Heart right ventricle (tissue), 16 donors: ENCODE measurements at regions of chr21 and their contacts with region 1.

Region 1: DNA sequence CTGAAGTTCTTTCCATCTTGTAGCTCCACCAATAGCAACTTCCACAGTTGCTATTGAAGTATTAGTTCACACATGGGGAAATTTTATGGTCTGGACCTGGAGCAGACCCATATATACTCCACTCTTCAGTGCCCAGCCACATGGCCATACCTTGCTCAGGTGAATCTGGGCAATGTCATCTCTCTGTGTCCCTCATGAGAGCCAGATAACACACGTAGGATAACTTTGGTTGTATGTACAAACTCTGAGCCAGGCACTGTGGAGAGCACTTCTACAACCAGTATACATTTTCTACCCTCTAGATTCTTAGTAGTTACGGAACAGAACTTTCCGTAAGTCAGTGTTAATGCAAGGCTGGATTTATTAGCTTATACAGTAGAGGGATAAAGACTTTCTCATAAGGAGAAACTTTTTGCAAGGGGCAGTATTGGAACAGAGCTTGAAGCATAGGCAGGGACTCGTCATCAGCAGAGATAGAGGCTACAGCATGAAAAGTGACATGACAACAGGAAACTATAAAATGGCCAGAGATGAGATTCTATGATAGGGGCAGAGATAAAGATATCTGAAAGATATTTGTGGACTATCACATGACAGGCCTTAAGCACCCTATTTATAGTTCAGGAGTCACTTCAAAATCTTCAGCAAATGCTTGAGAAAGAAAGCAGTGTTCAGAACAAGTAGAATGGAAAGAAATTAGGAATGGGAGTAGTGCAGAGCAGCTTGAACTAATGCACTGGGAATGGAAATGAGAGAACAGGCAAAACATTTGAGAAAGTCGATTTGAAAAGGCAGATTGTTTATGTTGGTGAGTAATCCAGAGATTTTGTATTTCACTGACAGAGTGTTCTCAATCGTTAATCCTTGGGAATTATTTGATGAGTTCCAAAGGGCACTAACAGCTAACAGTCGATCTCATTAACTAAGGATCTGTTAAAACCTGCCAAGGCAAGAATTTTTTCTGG is 481.8 kb downstream of the USP25 start:
- DNase-seq: no peak
- ATAC-seq: peak in 7 of 8 donors; percentile 38 to 62 (median 55)
- H3K4me3 ChIP-seq: peak overlapping the region in 3 of 10 donors; percentile 17 to 24 (median 23)
- H3K27ac ChIP-seq: peak overlapping the region; percentile 13 to 60 (median 34)
- H3K4me1 ChIP-seq: peaks cover 0 to 43% (median 14%) of the 10 kb centered on the region in 9 donors
- H3K27me3 ChIP-seq: no peaks in the 10 kb centered on the region
- CTCF ChIP-seq: no peak

Region 2: GRCh38 chr21:15604424-15604823 is 607.2 kb before region 1 on chr21:
- intact Hi-C with region 1: no loop called
- DNase-seq: no peak
- ATAC-seq: no peak
- H3K4me3 ChIP-seq: no peak overlapping the region
- H3K27ac ChIP-seq: no peak overlapping the region
- H3K4me1 ChIP-seq: no peaks in the 10 kb centered on the region
- H3K27me3 ChIP-seq: peaks cover 0 to 18% (median 0%) of the 10 kb centered on the region in 7 donors
- CTCF ChIP-seq: no peak

Region 3: GRCh38 chr21:16437586-16437985 is 226.0 kb after region 1 on chr21:
- intact Hi-C with region 1: loop called in 1 of 10 experiments (anchors 10 kb)
- DNase-seq: no peak
- ATAC-seq: no peak
- H3K4me3 ChIP-seq: no peak overlapping the region
- H3K27ac ChIP-seq: no peak overlapping the region
- H3K4me1 ChIP-seq: peaks cover 0 to 71% (median 37%) of the 10 kb centered on the region in 9 donors
- H3K27me3 ChIP-seq: no peaks in the 10 kb centered on the region
- CTCF ChIP-seq: no peak